Left colon (tissue), 2 donors: ENCODE measurements at regions of chr2 and their contacts with region 1.

Region 1: DNA sequence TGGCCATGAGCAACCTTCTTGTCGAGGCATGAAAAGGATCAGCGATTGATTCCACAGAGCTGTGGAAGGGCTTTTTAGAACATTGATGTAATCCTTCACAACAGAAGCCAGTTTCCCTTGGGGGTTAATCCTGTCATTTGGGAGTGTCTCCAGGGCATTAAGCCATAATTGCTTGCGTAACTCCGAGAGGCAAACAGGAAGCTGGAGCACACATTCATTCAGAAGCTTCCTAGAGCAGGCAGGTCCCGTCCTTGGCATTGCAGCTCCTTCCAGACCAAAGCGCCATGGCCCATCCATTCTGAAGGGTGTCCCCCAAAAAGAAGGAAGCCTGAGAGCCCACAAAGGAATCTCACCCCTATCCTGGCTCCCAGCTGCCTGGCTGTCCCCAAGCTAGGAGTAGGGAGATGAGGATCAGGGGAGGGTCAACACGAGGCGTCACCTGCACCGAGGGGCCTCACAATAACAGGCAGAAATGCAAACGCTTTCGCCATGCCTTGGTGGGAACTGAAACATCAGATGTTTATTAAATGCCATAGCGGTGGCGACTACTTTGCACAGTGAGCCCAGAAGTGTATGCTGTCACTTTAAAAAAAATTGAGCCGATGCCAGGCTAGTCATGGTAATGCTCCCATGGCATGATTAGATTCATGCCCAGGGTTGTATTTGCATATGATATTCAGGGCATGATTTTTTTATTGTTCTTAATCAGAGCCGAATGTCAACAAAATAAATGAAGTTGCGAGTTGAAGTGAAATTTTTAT is 339.4 kb downstream of the BCL11A start:
- DNase-seq: peak; percentile 69 to 70
- ATAC-seq: peak; percentile 90

Region 2: GRCh38 chr2:60549238-60549927 is 335.3 kb after region 1 on chr2:
- intact Hi-C with region 1: loop called in 1 of 2 experiments (anchors 10 kb)
- DNase-seq: peak in 1 of 2 donors; percentile 65
- ATAC-seq: peak; percentile 21